Endothelial cell of umbilical vein (primary cell): ENCODE measurements at regions of chr17 and their contacts with region 1.

Region 1: DNA sequence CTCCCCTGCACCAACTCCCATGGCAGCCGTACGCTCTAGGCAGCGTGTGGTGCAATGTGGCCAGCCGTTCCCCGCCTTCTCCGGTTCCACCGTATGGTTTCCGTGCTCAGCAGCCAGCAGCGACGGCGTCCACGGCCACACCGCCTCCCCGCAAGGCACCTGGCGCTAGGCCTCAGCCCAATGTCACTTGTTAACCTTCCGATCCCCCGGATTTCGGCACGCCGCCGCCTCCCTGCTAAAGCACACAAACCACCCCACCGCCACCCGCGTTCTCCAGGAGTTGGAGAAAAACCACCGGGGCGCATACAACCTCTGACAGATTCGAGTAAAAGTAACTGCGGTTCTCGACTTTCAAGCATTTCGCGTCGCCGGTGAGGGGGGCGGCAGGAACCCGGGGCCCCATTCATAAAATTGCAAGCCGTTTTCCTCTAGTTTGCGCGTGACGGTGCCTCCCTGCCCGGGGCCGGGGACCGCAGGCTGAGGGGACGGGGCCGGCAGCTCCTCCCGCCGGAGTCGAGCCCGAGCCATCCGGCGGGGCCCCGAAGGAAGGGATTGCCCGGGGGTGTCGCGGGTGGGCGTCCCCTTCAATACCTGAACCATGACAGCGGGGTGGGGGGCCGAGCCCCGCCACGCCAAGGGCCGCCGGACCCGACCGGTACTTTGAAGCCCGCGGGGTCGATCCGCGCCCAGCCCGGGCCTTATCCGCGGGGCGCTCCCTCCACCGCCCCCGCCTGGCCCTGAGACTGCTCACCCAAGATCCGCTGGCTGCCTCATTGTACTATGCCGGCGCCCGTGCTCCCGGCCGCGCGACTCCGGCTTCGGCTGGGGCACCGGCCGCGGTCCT is at the start of gene TEX2:
- DNase-seq: peak; percentile 42
- H3K4me3 ChIP-seq: peak within 1 kb of the TSS; percentile 52 to 68 (median 59)
- H3K27ac ChIP-seq: peak within 1 kb of the TSS; percentile 40
- H3K4me1 ChIP-seq: peaks cover 14% of the 10 kb centered on the region
- H3K27me3 ChIP-seq: peaks cover 5 to 7% of the 10 kb centered on the region in 2 experiments
- CTCF ChIP-seq: no peak
- POLR2A ChIP-seq: peak; percentile 54
- total RNA-seq, gene TEX2: 21.7 and 25.8 TPM in 2 replicates

Region 2: DNA sequence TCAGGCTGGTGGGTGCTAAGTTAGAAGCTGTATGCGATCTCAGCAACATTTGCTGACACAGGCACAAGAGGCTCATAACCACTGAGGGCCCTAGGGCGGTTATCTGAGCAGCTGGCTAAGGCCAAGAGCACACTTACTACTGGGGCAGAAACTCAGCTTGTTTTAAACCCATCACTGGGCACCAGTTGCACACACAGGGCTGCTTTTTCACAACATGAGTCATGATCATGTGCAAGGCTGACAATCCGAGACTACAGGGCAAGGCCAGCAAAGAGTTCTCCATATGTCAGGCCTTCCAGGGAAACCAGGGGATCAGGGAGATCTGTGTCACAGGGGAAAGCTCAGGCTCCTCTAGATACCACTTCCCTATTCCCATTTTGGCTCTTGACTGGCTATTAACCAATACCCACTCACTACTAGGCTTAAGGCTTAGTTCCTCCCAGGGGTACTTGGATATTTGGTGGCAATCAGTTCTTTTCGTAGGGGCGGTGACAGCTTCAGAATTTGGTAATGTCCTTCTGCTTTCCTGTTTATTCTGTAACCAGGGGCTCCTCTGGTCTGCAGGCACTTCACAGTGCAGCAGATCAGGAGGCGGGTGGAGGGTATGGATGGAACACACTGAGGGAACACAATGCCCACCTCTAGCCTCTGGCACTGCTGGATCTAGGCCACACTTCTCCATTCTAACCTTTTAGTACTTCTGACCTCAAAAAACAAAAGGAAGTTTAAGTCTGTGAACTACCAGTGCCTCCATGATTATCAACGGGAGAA is 87.8 kb before region 1 on chr17:
- CTCF ChIA-PET with region 1: interaction called, 3 read pairs
- POLR2A ChIA-PET with region 1: interaction called, 5 read pairs
- dilution Hi-C with region 1: no loop called
- intact Hi-C with region 1: loop called (anchors 5 kb)
- DNase-seq: peak; percentile 67
- H3K4me3 ChIP-seq: no peak overlapping the region
- H3K27ac ChIP-seq: peak overlapping the region; percentile 19
- H3K4me1 ChIP-seq: peaks cover 40% of the 10 kb centered on the region
- H3K27me3 ChIP-seq: no peaks in the 10 kb centered on the region
- CTCF ChIP-seq: no peak
- POLR2A ChIP-seq: no peak

Region 3: GRCh38 chr17:64580384-64581315 is 318.0 kb after region 1 on chr17:
- CTCF ChIA-PET with region 1: no interaction called
- POLR2A ChIA-PET with region 1: no interaction called
- dilution Hi-C with region 1: no loop called
- intact Hi-C with region 1: no loop called
- DNase-seq: no peak
- H3K4me3 ChIP-seq: no peak overlapping the region
- H3K27ac ChIP-seq: no peak overlapping the region
- H3K4me1 ChIP-seq: peaks cover 3% of the 10 kb centered on the region
- H3K27me3 ChIP-seq: no peaks in the 10 kb centered on the region
- CTCF ChIP-seq: no peak
- POLR2A ChIP-seq: no peak